ENCODE measurements at regions of chr16 and their contacts with region 1.

Region 1: DNA sequence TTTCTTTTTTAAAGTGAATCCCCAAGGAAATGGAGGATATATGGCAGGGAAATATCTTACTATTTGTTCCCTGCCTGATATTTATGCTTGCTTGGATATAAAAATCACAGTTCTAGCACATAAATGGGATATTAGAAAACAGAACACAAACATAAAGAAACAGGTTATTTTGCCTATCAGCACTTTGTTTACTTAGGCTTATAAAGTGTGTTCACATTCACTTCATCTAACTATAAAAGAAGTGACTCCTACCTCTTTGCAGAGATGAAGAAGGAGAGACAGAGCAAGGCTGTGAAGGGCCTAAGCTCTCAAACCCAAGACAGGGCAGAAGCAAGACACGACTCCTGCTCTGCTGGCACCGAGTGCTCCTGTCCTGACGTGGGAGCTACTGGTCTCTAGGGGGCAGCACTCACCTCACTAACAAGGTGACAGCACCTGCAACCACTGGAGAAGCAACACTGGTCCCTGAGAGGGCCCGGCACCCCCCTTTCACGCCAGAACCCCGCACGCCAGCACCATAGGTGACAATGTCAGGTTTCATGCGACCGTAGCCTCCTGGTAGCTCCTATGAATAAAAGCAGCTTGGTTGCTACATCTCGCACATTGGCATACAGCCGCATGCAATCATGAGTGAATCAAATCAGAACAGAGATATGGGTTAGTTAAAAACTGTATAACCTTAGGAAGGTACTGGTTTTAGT is 32.0 kb downstream of the MBTPS1 start:
- DNase-seq: peak; percentile 62
- H3K4me3 ChIP-seq: no peak overlapping the region
- H3K27ac ChIP-seq: no peak overlapping the region
- H3K4me1 ChIP-seq: no peaks in the 10 kb centered on the region
- H3K27me3 ChIP-seq: no peaks in the 10 kb centered on the region
- CTCF ChIP-seq: peak; percentile 81

Region 2: GRCh38 chr16:84175350-84176081 is 90.8 kb after region 1 on chr16:
- CTCF ChIA-PET with region 1: interaction called, 5 read pairs
- POLR2A ChIA-PET with region 1: no interaction called
- intact Hi-C with region 1: loop called (anchors 5 kb)
- DNase-seq: peak; percentile 77
- H3K4me3 ChIP-seq: no peak overlapping the region
- H3K27ac ChIP-seq: no peak overlapping the region
- H3K4me1 ChIP-seq: no peaks in the 10 kb centered on the region
- H3K27me3 ChIP-seq: no peaks in the 10 kb centered on the region
- CTCF ChIP-seq: peak; percentile 76

Region 3: DNA sequence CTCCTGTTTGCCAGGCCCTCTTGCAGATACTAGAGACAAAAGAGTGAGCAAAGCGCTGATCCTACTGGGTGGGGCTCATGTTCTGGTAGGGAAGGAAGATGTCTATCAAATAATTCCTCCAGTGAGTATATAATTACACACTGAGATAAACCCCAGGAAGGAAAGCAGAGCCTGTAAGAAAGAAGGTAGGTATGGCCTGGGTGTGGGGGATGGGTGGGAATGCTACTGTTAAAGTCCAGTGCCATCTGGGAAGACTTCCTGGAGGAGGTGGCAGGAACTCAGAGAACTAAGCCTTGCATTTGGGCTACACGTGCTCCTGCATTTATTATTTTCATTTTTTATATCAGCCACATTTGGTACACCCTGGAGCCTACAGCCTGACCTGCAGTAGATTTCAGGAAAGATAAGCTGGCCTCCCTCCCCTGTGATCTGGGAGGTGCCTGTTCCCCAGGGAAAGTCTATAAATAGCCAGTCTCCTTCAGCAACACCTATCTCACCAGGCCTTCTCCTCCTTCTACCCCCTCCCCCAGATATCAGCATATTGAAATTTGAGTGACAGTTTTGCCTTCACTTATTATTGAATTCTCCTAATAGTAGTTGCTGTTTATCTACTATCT is 295.1 kb after region 1 on chr16:
- CTCF ChIA-PET with region 1: no interaction called
- POLR2A ChIA-PET with region 1: no interaction called
- intact Hi-C with region 1: no loop called
- DNase-seq: peak; percentile 7
- H3K4me3 ChIP-seq: no peak overlapping the region
- H3K27ac ChIP-seq: no peak overlapping the region
- H3K4me1 ChIP-seq: no peaks in the 10 kb centered on the region
- H3K27me3 ChIP-seq: peaks cover 15% of the 10 kb centered on the region
- CTCF ChIP-seq: no peak